Activated CD4-positive, alpha-beta T cell treated with anti-CD3 and anti-CD28 coated beads for 36 hours (primary cell): ENCODE measurements at regions of chrX and their contacts with region 1.

Region 1: GRCh38 chrX:46588263-46588662 is 14.7 kb downstream of the CHST7 start:
- DNase-seq: peak; percentile 66
- ATAC-seq: peak; percentile 51
- H3K4me3 Mint-ChIP-seq: peak overlapping the region; percentile 40
- H3K27ac Mint-ChIP-seq: peak overlapping the region; percentile 84
- H3K4me1 Mint-ChIP-seq: peaks cover 44% of the 10 kb centered on the region
- H3K27me3 Mint-ChIP-seq: no peaks in the 10 kb centered on the region

Region 2: GRCh38 chrX:46628460-46629371 is 40.5 kb after region 1 on chrX:
- CTCF ChIA-PET with region 1: no interaction called
- POLR2A ChIA-PET with region 1: no interaction called
- intact Hi-C with region 1: loop called (anchors 2 to 5 kb)
- DNase-seq: peak; percentile 37
- ATAC-seq: peak; percentile 76
- H3K4me3 Mint-ChIP-seq: no peak overlapping the region
- H3K27ac Mint-ChIP-seq: peak overlapping the region; percentile 40
- H3K4me1 Mint-ChIP-seq: peaks cover 37% of the 10 kb centered on the region
- H3K27me3 Mint-ChIP-seq: no peaks in the 10 kb centered on the region

Region 3: GRCh38 chrX:46777971-46778810 is 189.9 kb after region 1 on chrX:
- CTCF ChIA-PET with region 1: no interaction called
- POLR2A ChIA-PET with region 1: interaction called, 11 read pairs
- intact Hi-C with region 1: no loop called
- DNase-seq: no peak
- ATAC-seq: no peak
- H3K4me3 Mint-ChIP-seq: no peak overlapping the region
- H3K27ac Mint-ChIP-seq: peak overlapping the region; percentile 47
- H3K4me1 Mint-ChIP-seq: peaks cover 17% of the 10 kb centered on the region
- H3K27me3 Mint-ChIP-seq: peaks cover 3% of the 10 kb centered on the region

Region 4: DNA sequence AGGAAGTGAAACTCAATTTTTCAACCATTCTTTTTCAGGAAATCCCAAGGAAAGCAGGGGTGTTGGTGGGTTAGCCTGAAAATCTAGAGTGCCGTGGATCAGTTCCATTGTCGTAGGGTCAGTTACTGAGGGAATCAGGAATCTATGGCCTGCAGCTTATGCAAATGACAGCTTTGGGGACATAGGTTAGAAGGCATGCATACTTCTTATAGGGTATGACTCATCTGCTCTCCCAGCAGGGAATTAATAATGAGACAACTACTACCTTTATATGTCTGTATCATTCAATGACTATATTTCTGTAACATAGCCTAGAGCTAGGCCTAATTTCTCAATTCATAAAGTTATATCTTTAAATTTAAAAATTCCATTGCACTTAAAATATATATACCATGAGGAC is 858.2 kb after region 1 on chrX:
- CTCF ChIA-PET with region 1: no interaction called
- POLR2A ChIA-PET with region 1: no interaction called
- intact Hi-C with region 1: no loop called
- DNase-seq: no peak
- ATAC-seq: no peak
- H3K4me3 Mint-ChIP-seq: no peak overlapping the region
- H3K27ac Mint-ChIP-seq: no peak overlapping the region
- H3K4me1 Mint-ChIP-seq: no peaks in the 10 kb centered on the region
- H3K27me3 Mint-ChIP-seq: no peaks in the 10 kb centered on the region